Activated naive CD4-positive, alpha-beta T cell treated with anti-CD3 and anti-CD28 coated beads for 36 hours (primary cell): ENCODE measurements at regions of chr5 and their contacts with region 1.

Region 1: DNA sequence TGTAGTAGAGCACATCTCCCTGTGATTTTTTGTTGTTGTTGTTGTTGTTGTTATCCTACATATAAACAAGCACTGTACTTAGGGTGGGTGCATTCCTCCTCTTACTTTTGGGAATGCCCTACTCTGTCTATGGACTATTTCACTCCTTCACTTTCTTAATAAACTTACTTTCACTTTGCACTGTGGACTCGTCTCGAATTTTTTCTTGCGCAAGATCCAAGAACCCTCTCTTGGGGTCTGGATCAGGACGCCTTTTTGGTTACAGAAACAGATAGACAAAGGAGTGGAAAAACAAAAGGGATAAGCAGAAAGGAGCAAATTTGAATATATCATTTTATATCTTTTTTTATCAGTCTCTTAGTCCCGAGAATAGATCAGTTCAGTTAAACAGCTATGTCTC is 14.4 kb upstream of the PAIP1 start:
- DNase-seq: no peak
- H3K4me3 Mint-ChIP-seq: no peak overlapping the region
- H3K27ac Mint-ChIP-seq: no peak overlapping the region
- H3K4me1 Mint-ChIP-seq: no peaks in the 10 kb centered on the region
- H3K27me3 Mint-ChIP-seq: no peaks in the 10 kb centered on the region

Region 2: GRCh38 chr5:43019614-43020293 is 551.5 kb before region 1 on chr5:
- CTCF ChIA-PET with region 1: no interaction called
- intact Hi-C with region 1: no loop called
- DNase-seq: peak; percentile 90
- H3K4me3 Mint-ChIP-seq: peak overlapping the region; percentile 97
- H3K27ac Mint-ChIP-seq: peak overlapping the region; percentile 99
- H3K4me1 Mint-ChIP-seq: peaks cover 37% of the 10 kb centered on the region
- H3K27me3 Mint-ChIP-seq: no peaks in the 10 kb centered on the region

Region 3: GRCh38 chr5:43268188-43268820 is 302.9 kb before region 1 on chr5:
- CTCF ChIA-PET with region 1: no interaction called
- intact Hi-C with region 1: no loop called
- DNase-seq: no peak
- H3K4me3 Mint-ChIP-seq: no peak overlapping the region
- H3K27ac Mint-ChIP-seq: no peak overlapping the region
- H3K4me1 Mint-ChIP-seq: peaks cover 2% of the 10 kb centered on the region
- H3K27me3 Mint-ChIP-seq: peaks cover 38% of the 10 kb centered on the region

Region 4: GRCh38 chr5:43592363-43592762 is 21.1 kb after region 1 on chr5:
- CTCF ChIA-PET with region 1: no interaction called
- intact Hi-C with region 1: loop called (anchors 2 kb)
- DNase-seq: no peak
- H3K4me3 Mint-ChIP-seq: no peak overlapping the region
- H3K27ac Mint-ChIP-seq: no peak overlapping the region
- H3K4me1 Mint-ChIP-seq: no peaks in the 10 kb centered on the region
- H3K27me3 Mint-ChIP-seq: no peaks in the 10 kb centered on the region

Region 5: GRCh38 chr5:43646992-43647391 is 75.7 kb after region 1 on chr5:
- CTCF ChIA-PET with region 1: no interaction called
- intact Hi-C with region 1: no loop called
- DNase-seq: no peak
- H3K4me3 Mint-ChIP-seq: no peak overlapping the region
- H3K27ac Mint-ChIP-seq: no peak overlapping the region
- H3K4me1 Mint-ChIP-seq: no peaks in the 10 kb centered on the region
- H3K27me3 Mint-ChIP-seq: no peaks in the 10 kb centered on the region